Activated B cell treated with CpG ODN at 0.5 μM for 24 hours (primary cell): ENCODE measurements at regions of chr6 and their contacts with region 1.

Region 1: GRCh38 chr6:122730775-122731386 is 48.6 kb upstream of the FABP7 start:
- DNase-seq: no peak
- ATAC-seq: no peak
- H3K4me3 Mint-ChIP-seq: no peak overlapping the region
- H3K27ac Mint-ChIP-seq: no peak overlapping the region
- H3K4me1 Mint-ChIP-seq: no peaks in the 10 kb centered on the region
- H3K27me3 Mint-ChIP-seq: peaks cover 5% of the 10 kb centered on the region
- CTCF ChIP-seq: peak; percentile 51

Region 2: DNA sequence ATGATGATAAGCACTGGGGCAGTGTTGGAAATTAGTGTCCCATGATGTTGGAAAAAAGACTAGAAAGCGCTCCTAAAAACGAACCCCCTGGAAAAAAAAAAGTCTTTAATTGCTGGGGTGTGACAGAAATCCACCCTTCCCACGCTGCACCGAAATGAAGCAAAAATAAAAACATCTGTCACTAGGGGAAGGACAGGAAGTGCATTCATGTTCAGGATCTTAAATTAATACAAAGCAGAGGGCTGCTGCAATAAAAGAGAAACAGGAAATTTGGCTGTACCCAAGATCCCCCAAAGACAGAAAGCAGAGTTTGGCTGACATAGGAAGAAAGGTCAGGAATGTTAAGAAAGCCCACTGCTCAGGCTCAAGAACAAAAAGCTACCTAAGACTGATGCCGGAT is 1730.5 kb before region 1 on chr6:
- CTCF ChIA-PET with region 1: no interaction called
- POLR2A ChIA-PET with region 1: no interaction called
- intact Hi-C with region 1: no loop called
- DNase-seq: no peak
- ATAC-seq: no peak
- H3K4me3 Mint-ChIP-seq: no peak overlapping the region
- H3K27ac Mint-ChIP-seq: no peak overlapping the region
- H3K4me1 Mint-ChIP-seq: no peaks in the 10 kb centered on the region
- H3K27me3 Mint-ChIP-seq: no peaks in the 10 kb centered on the region
- CTCF ChIP-seq: no peak

Region 3: DNA sequence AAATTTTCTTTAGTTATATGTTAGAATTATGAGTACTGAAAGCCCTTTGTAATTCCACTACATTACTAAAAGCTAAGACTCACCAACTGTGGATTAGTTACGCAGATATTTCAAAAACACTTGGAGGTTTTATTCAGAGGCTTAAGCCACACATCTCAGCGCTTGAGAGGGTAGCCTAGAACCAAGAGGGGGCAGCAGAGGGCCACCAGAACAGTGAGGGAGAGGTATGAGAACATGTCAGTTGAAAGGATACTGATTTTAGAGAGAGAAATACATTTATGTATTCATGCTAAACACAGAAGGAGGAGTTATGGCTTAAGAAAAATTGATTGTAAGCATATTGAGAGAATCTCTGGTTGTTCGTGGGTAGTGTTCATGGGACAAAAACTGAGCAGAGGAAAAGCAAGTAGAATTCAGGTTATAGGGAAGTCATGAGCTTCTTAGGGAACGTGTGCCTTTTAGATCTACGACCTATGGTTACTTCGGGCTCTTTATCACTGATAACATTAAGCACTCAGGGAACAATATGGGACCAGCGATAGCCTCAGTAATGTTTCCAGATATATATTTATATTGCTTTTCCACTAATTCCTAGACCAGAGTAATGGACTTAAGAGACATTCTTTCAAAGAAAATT is 238.8 kb before region 1 on chr6:
- CTCF ChIA-PET with region 1: no interaction called
- POLR2A ChIA-PET with region 1: no interaction called
- intact Hi-C with region 1: loop called (anchors 1 kb)
- DNase-seq: peak; percentile 27
- ATAC-seq: peak; percentile 100
- H3K4me3 Mint-ChIP-seq: peak overlapping the region; percentile 3
- H3K27ac Mint-ChIP-seq: no peak overlapping the region
- H3K4me1 Mint-ChIP-seq: peaks cover 12% of the 10 kb centered on the region
- H3K27me3 Mint-ChIP-seq: peaks cover under 1% of the 10 kb centered on the region
- CTCF ChIP-seq: no peak

Region 4: GRCh38 chr6:122839477-122839876 is 108.6 kb after region 1 on chr6:
- CTCF ChIA-PET with region 1: interaction called, 52 read pairs
- POLR2A ChIA-PET with region 1: interaction called, 4 read pairs
- intact Hi-C with region 1: loop called (anchors 1 kb)
- DNase-seq: no peak
- ATAC-seq: peak; percentile 58
- H3K4me3 Mint-ChIP-seq: no peak overlapping the region
- H3K27ac Mint-ChIP-seq: no peak overlapping the region
- H3K4me1 Mint-ChIP-seq: no peaks in the 10 kb centered on the region
- H3K27me3 Mint-ChIP-seq: peaks cover 7% of the 10 kb centered on the region
- CTCF ChIP-seq: no peak

Region 5: GRCh38 chr6:123587838-123588546 is 857.1 kb after region 1 on chr6:
- CTCF ChIA-PET with region 1: no interaction called
- POLR2A ChIA-PET with region 1: no interaction called
- intact Hi-C with region 1: no loop called
- DNase-seq: no peak
- ATAC-seq: no peak
- H3K4me3 Mint-ChIP-seq: no peak overlapping the region
- H3K27ac Mint-ChIP-seq: no peak overlapping the region
- H3K4me1 Mint-ChIP-seq: no peaks in the 10 kb centered on the region
- H3K27me3 Mint-ChIP-seq: no peaks in the 10 kb centered on the region
- CTCF ChIP-seq: no peak